CD8-positive, alpha-beta T cell (primary cell): ENCODE measurements at regions of chr10 and their contacts with region 1.

Region 1: GRCh38 chr10:70221030-70221429 is 12.2 kb downstream of the PPA1 start:
- DNase-seq: peak in 1 of 9 experiments; percentile 9
- ATAC-seq: no peak
- H3K4me3 ChIP-seq: no peak overlapping the region
- H3K4me3 Mint-ChIP-seq: no peak overlapping the region
- H3K27ac ChIP-seq: peak overlapping the region in 1 of 2 experiments; percentile 36
- H3K27ac Mint-ChIP-seq: peak overlapping the region; percentile 55
- H3K4me1 ChIP-seq: peaks cover 4% of the 10 kb centered on the region
- H3K4me1 Mint-ChIP-seq: peaks cover 14% of the 10 kb centered on the region
- H3K27me3 ChIP-seq: no peaks in the 10 kb centered on the region
- H3K27me3 Mint-ChIP-seq: no peaks in the 10 kb centered on the region
- CTCF ChIP-seq: no peak

Region 2: GRCh38 chr10:69537449-69537848 is 683.6 kb before region 1 on chr10:
- CTCF ChIA-PET with region 1: no interaction called
- POLR2A ChIA-PET with region 1: no interaction called
- intact Hi-C with region 1: no loop called
- DNase-seq: no peak
- ATAC-seq: no peak
- H3K4me3 ChIP-seq: no peak overlapping the region
- H3K4me3 Mint-ChIP-seq: no peak overlapping the region
- H3K27ac ChIP-seq: no peak overlapping the region
- H3K27ac Mint-ChIP-seq: no peak overlapping the region
- H3K4me1 ChIP-seq: no peaks in the 10 kb centered on the region
- H3K4me1 Mint-ChIP-seq: no peaks in the 10 kb centered on the region
- H3K27me3 ChIP-seq: no peaks in the 10 kb centered on the region
- H3K27me3 Mint-ChIP-seq: peaks cover 26% of the 10 kb centered on the region
- CTCF ChIP-seq: no peak

Region 3: DNA sequence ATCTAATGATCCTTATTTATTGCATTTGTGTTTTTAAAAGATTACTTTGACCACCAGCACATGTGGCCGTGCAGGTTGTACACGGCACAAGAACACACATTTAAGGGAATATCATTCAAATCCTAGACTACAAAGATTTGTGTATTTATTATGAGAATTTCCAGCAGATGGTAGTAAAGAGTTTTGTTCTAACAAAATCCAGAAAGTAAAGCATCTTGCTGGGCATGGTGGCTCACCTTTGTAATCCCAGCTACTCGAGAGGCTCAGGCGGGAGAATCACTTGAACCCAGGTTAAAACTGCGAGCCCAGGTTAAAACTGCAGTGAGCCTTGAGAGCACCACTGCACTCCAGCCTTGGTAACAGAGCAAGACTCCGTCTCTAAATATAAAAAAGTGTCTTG is 136.8 kb before region 1 on chr10:
- CTCF ChIA-PET with region 1: no interaction called
- POLR2A ChIA-PET with region 1: no interaction called
- intact Hi-C with region 1: loop called in 1 of 2 experiments (anchors 1 kb)
- DNase-seq: peak in 2 of 9 experiments; percentile 15 to 31
- ATAC-seq: no peak
- H3K4me3 ChIP-seq: no peak overlapping the region
- H3K4me3 Mint-ChIP-seq: no peak overlapping the region
- H3K27ac ChIP-seq: no peak overlapping the region
- H3K27ac Mint-ChIP-seq: no peak overlapping the region
- H3K4me1 ChIP-seq: no peaks in the 10 kb centered on the region
- H3K4me1 Mint-ChIP-seq: no peaks in the 10 kb centered on the region
- H3K27me3 ChIP-seq: no peaks in the 10 kb centered on the region
- H3K27me3 Mint-ChIP-seq: no peaks in the 10 kb centered on the region
- CTCF ChIP-seq: no peak

Region 4: GRCh38 chr10:70233109-70233938 is 12.3 kb after region 1 on chr10 and contains the start of gene PPA1:
- CTCF ChIA-PET with region 1: interaction called, 35 read pairs
- POLR2A ChIA-PET with region 1: interaction called, 10 read pairs
- intact Hi-C with region 1: loop called in 1 of 2 experiments (anchors 1 kb)
- DNase-seq: peak; percentile 98 to 100 (median 99)
- ATAC-seq: peak; percentile 93
- H3K4me3 ChIP-seq: peak within 1 kb of the TSS; percentile 87 to 90
- H3K4me3 Mint-ChIP-seq: peak within 1 kb of the TSS; percentile 89
- H3K27ac ChIP-seq: peak within 1 kb of the TSS; percentile 74 to 80
- H3K27ac Mint-ChIP-seq: peak within 1 kb of the TSS; percentile 93
- H3K4me1 ChIP-seq: peaks cover 9% of the 10 kb centered on the region
- H3K4me1 Mint-ChIP-seq: peaks cover 36% of the 10 kb centered on the region
- H3K27me3 ChIP-seq: no peaks in the 10 kb centered on the region
- H3K27me3 Mint-ChIP-seq: peaks cover 4% of the 10 kb centered on the region
- CTCF ChIP-seq: no peak
- total RNA-seq, gene PPA1: 79.9 to 83.1 TPM

Region 5: DNA sequence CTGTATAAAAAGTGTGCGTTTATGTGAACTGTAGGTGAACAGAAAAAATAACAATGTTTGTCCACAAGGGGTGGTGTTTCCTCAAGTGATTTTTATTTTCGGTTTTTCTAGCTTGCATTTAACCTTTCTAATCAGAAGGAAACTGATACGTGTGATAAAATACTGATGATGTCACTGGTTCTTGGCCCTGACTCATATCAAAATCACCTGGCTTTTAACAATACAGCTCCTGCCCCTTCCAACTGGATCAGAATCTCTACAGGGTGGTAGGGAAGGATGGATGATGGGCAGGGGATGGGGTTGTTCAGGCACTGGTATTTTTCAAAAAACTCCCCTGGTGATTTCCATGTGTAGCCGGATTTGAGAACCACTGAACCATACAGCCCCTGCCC is 51.9 kb after region 1 on chr10:
- CTCF ChIA-PET with region 1: interaction called, 16 read pairs
- POLR2A ChIA-PET with region 1: no interaction called
- intact Hi-C with region 1: loop called (anchors 5 to 10 kb)
- DNase-seq: peak in 2 of 9 experiments; percentile 55 to 73
- ATAC-seq: peak; percentile 86
- H3K4me3 ChIP-seq: no peak overlapping the region
- H3K4me3 Mint-ChIP-seq: peak overlapping the region; percentile 57
- H3K27ac ChIP-seq: no peak overlapping the region
- H3K27ac Mint-ChIP-seq: no peak overlapping the region
- H3K4me1 ChIP-seq: no peaks in the 10 kb centered on the region
- H3K4me1 Mint-ChIP-seq: peaks cover 9% of the 10 kb centered on the region
- H3K27me3 ChIP-seq: no peaks in the 10 kb centered on the region
- H3K27me3 Mint-ChIP-seq: no peaks in the 10 kb centered on the region
- CTCF ChIP-seq: peak; percentile 73

Region 6: DNA sequence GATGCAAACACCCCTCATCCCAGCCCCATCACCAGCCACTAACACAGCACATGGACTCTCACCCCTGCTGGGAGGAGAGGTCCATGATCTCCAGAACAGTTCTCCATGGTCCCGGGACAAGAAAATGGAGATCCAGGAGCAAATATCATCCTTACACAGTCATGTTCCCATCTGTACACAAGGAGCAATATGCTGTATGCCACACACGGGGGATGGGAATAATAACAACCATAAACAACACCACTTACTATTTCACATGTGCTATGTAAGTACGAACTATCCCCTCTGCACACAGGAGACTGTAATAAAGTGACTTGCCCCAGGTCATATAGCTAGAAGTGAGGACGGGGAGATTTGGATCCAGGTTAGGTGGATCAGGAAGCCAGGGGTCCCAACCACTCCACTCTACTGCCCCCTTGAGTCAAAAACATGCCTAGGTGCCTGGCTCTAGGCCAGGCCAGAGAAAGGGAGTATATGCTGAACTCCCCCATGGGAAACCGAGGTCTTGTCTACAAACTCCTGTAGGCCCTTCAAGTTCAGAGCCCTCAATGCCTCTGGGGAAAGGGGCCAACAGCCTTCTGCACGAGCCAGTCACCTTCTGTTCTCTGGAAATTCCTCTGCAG is 127.3 kb after region 1 on chr10:
- CTCF ChIA-PET with region 1: interaction called, 25 read pairs
- POLR2A ChIA-PET with region 1: no interaction called
- intact Hi-C with region 1: loop called in 1 of 2 experiments (anchors 1 kb)
- DNase-seq: peak in 6 of 9 experiments; percentile 18 to 60 (median 32)
- ATAC-seq: peak; percentile 38
- H3K4me3 ChIP-seq: no peak overlapping the region
- H3K4me3 Mint-ChIP-seq: no peak overlapping the region
- H3K27ac ChIP-seq: no peak overlapping the region
- H3K27ac Mint-ChIP-seq: no peak overlapping the region
- H3K4me1 ChIP-seq: no peaks in the 10 kb centered on the region
- H3K4me1 Mint-ChIP-seq: no peaks in the 10 kb centered on the region
- H3K27me3 ChIP-seq: no peaks in the 10 kb centered on the region
- H3K27me3 Mint-ChIP-seq: no peaks in the 10 kb centered on the region
- CTCF ChIP-seq: peak; percentile 39

Region 7: GRCh38 chr10:70376436-70377378 is 155.7 kb after region 1 on chr10:
- CTCF ChIA-PET with region 1: interaction called, 370 read pairs
- POLR2A ChIA-PET with region 1: interaction called, 4 read pairs
- intact Hi-C with region 1: no loop called
- DNase-seq: no peak
- ATAC-seq: no peak
- H3K4me3 ChIP-seq: no peak overlapping the region
- H3K4me3 Mint-ChIP-seq: no peak overlapping the region
- H3K27ac ChIP-seq: no peak overlapping the region
- H3K27ac Mint-ChIP-seq: no peak overlapping the region
- H3K4me1 ChIP-seq: peaks cover 8% of the 10 kb centered on the region
- H3K4me1 Mint-ChIP-seq: peaks cover 8% of the 10 kb centered on the region
- H3K27me3 ChIP-seq: no peaks in the 10 kb centered on the region
- H3K27me3 Mint-ChIP-seq: peaks cover 2% of the 10 kb centered on the region
- CTCF ChIP-seq: no peak

Region 8: DNA sequence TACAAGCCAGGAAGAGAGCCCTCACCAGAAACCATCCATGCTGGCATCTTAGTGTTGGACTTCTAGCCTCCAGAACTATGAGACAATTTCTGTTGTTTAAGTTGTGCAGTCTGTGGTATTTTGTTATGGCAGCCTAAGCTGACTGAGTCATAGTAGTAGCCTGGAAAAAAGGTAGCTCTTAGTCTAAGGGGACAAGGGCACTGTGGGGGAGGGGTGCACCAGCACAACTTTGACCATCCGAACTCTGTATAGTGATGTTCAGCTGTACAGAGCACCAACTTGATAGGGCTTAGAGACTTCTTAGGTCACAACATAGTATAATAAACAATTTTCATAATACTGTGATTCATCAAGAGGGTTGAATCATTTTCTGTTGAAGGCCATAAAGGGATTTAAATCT is 197.2 kb after region 1 on chr10:
- CTCF ChIA-PET with region 1: no interaction called
- POLR2A ChIA-PET with region 1: no interaction called
- intact Hi-C with region 1: no loop called
- DNase-seq: no peak
- ATAC-seq: no peak
- H3K4me3 ChIP-seq: no peak overlapping the region
- H3K4me3 Mint-ChIP-seq: no peak overlapping the region
- H3K27ac ChIP-seq: no peak overlapping the region
- H3K27ac Mint-ChIP-seq: peak overlapping the region; percentile 75
- H3K4me1 ChIP-seq: no peaks in the 10 kb centered on the region
- H3K4me1 Mint-ChIP-seq: peaks cover 26% of the 10 kb centered on the region
- H3K27me3 ChIP-seq: no peaks in the 10 kb centered on the region
- H3K27me3 Mint-ChIP-seq: no peaks in the 10 kb centered on the region
- CTCF ChIP-seq: no peak

Region 9: DNA sequence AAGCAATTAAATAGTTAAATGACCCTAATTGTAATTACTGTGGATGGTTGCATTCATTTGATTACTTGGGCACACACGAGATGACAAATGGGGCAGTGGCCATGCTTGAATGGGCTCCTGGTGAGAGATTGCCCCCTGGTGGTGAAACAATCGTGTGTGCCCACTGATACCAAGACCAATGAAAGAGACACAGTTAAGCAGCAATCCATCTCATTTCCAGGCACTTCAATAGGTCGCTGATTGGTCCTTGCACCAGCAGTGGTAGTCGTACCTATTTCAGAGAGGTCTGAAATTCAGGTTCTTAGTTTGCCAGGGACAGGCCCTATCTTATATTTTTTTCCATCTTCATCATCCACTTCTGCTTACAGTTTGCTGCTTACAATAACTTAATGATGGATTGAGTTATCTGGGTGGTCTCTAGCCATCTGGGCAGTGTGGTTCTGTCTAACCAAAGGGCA is 659.1 kb after region 1 on chr10:
- CTCF ChIA-PET with region 1: no interaction called
- POLR2A ChIA-PET with region 1: no interaction called
- intact Hi-C with region 1: loop called in 1 of 2 experiments (anchors 5 kb)
- DNase-seq: peak; percentile 45 to 87 (median 76)
- ATAC-seq: peak; percentile 92
- H3K4me3 ChIP-seq: no peak overlapping the region
- H3K4me3 Mint-ChIP-seq: no peak overlapping the region
- H3K27ac ChIP-seq: no peak overlapping the region
- H3K27ac Mint-ChIP-seq: no peak overlapping the region
- H3K4me1 ChIP-seq: no peaks in the 10 kb centered on the region
- H3K4me1 Mint-ChIP-seq: peaks cover 2% of the 10 kb centered on the region
- H3K27me3 ChIP-seq: no peaks in the 10 kb centered on the region
- H3K27me3 Mint-ChIP-seq: no peaks in the 10 kb centered on the region
- CTCF ChIP-seq: peak; percentile 84